ENCODE measurements at regions of chr12 and their contacts with region 1.

Region 1: GRCh38 chr12:42129595-42130204 is 15.0 kb downstream of the GXYLT1 start:
- DNase-seq: peak; percentile 80
- ATAC-seq: peak; percentile 82
- H3K4me3 ChIP-seq: no peak overlapping the region
- H3K27ac ChIP-seq: no peak overlapping the region
- H3K4me1 ChIP-seq: peaks cover 5% of the 10 kb centered on the region
- H3K27me3 ChIP-seq: no peaks in the 10 kb centered on the region
- CTCF ChIP-seq: peak; percentile 93
- POLR2A ChIP-seq: no peak
- RAD21 ChIP-seq: peak; percentile 96

Region 2: GRCh38 chr12:41344776-41345470 is 784.8 kb before region 1 on chr12:
- CTCF ChIA-PET with region 1: no interaction called
- POLR2A ChIA-PET with region 1: no interaction called
- dilution Hi-C with region 1: no loop called
- in situ Hi-C with region 1: no loop called
- intact Hi-C with region 1: no loop called
- DNase-seq: no peak
- ATAC-seq: no peak
- H3K4me3 ChIP-seq: no peak overlapping the region
- H3K27ac ChIP-seq: no peak overlapping the region
- H3K4me1 ChIP-seq: no peaks in the 10 kb centered on the region
- H3K27me3 ChIP-seq: no peaks in the 10 kb centered on the region
- CTCF ChIP-seq: no peak
- POLR2A ChIP-seq: no peak
- RAD21 ChIP-seq: no peak

Region 3: DNA sequence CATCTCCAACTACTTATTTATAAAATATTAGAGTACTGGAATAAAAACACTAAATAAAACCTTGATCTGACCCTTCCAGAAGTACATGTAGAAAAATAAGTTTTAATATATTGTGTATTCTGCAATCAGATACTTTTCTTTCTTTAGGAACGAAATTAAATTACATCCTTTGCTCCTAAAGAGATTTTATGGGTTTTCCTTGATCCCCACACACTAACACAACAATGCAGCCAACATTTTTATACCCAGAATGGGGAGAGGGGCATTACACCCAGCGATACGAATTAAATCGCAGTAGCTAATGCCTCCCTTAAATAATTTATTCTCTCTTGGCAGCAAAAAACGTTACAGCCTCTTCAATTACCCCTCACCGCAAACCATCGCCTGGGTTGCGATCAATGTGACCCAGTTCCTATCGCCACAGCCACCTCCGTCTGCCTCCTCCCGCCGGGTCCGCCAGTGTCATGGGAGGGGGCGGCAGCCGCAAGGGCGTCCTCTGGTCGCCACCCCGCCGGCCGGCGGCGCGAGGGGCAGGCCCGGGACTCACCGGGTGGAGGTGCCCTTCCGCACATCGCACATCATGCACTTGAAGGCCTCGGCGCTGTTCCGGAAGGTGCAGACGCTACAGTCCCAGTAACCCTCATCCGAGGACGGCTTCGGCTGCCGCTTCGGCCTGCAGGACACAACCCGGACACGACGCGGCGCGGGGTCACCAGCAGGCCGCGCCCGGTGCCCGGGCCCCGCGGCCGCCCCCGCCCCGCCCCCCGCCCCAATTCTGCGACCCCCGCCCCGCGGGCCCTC is 107.6 kb after region 1 on chr12:
- CTCF ChIA-PET with region 1: no interaction called
- POLR2A ChIA-PET with region 1: no interaction called
- dilution Hi-C with region 1: no loop called
- in situ Hi-C with region 1: no loop called
- intact Hi-C with region 1: loop called (anchors 5 kb)
- DNase-seq: peak; percentile 75
- ATAC-seq: peak; percentile 76
- H3K4me3 ChIP-seq: peak overlapping the region; percentile 97
- H3K27ac ChIP-seq: peak overlapping the region; percentile 85
- H3K4me1 ChIP-seq: no peaks in the 10 kb centered on the region
- H3K27me3 ChIP-seq: no peaks in the 10 kb centered on the region
- CTCF ChIP-seq: peak; percentile 45; the same call in 1 of the 2 replicates
- POLR2A ChIP-seq: no peak; the same call in 1 of the 2 replicates
- RAD21 ChIP-seq: peak; percentile 25

Region 4: DNA sequence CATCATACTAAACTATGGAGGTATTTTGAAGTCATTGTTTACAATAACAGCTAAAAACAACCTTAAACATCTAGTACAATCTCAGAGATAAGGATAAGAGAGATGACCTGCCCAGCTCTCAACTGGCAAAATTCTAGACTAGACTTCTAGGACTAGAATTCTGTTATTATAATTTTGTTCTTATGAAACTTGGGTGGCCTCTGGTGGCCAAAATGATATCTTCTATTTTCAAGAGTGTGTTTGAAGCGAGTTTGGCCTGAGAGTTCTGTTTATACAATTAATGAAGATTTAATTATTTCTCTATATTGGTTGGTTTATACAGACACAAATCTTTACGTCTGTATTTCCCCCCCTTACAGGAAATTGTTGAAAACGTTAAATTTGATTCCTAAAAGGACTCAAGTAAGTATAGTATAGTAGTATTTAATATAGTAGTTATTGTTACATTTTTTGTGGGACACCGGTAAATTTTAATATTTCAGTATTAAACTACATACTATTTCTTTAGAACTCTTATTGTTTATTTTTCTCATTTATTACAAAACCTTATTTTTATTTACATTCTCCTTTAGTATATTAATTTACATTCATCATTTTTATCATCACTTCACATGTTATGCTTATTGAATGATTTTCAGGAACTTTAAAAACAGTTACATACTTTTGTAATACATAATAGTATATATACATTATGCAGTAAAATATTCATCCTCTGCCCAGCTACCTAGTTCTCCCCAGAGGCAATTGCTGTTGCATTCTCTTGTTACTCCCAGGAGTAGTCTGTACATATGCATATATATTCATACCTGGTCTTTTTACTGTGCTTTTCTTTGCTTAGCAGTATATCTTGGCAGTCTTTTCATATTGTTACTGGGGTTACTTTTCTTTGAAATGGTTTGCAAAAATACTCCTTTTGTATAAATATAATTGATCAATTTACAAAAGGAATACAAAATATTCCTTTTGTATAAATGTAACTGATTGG is 202.9 kb after region 1 on chr12:
- CTCF ChIA-PET with region 1: interaction called, 3 read pairs
- POLR2A ChIA-PET with region 1: no interaction called
- dilution Hi-C with region 1: no loop called
- in situ Hi-C with region 1: loop called (anchors 5 kb)
- intact Hi-C with region 1: loop called (anchors 1 kb)
- DNase-seq: peak; percentile 51
- ATAC-seq: peak; percentile 85
- H3K4me3 ChIP-seq: no peak overlapping the region
- H3K27ac ChIP-seq: no peak overlapping the region
- H3K4me1 ChIP-seq: 0 out of 2 replicates have a peak, but pooled peaks cover 1% of the 10 kb centered on the region
- H3K27me3 ChIP-seq: no peaks in the 10 kb centered on the region
- CTCF ChIP-seq: peak; percentile 63
- POLR2A ChIP-seq: no peak
- RAD21 ChIP-seq: peak; percentile 66

Region 5: GRCh38 chr12:42482445-42483237 is 352.9 kb after region 1 on chr12:
- CTCF ChIA-PET with region 1: no interaction called
- POLR2A ChIA-PET with region 1: no interaction called
- dilution Hi-C with region 1: no loop called
- in situ Hi-C with region 1: no loop called
- intact Hi-C with region 1: loop called (anchors 5 kb)
- DNase-seq: peak; percentile 65
- ATAC-seq: peak; percentile 80
- H3K4me3 ChIP-seq: peak overlapping the region; percentile 91
- H3K27ac ChIP-seq: peak overlapping the region; percentile 91
- H3K4me1 ChIP-seq: peaks cover 7% of the 10 kb centered on the region
- H3K27me3 ChIP-seq: no peaks in the 10 kb centered on the region
- CTCF ChIP-seq: peak; percentile 93
- POLR2A ChIP-seq: no peak
- RAD21 ChIP-seq: peak; percentile 82

Region 6: GRCh38 chr12:43282106-43282505 is 1152.4 kb after region 1 on chr12:
- CTCF ChIA-PET with region 1: no interaction called
- POLR2A ChIA-PET with region 1: no interaction called
- dilution Hi-C with region 1: no loop called
- in situ Hi-C with region 1: loop called (anchors 10 kb)
- intact Hi-C with region 1: loop called (anchors 1 kb)
- DNase-seq: peak; percentile 65
- ATAC-seq: peak; percentile 22; the same call in 1 of the 2 replicates
- H3K4me3 ChIP-seq: no peak overlapping the region
- H3K27ac ChIP-seq: no peak overlapping the region
- H3K4me1 ChIP-seq: peaks cover 6% of the 10 kb centered on the region; the same call in 1 of the 2 replicates
- H3K27me3 ChIP-seq: no peaks in the 10 kb centered on the region
- CTCF ChIP-seq: peak; percentile 69
- POLR2A ChIP-seq: no peak
- RAD21 ChIP-seq: peak; percentile 78

Measured in IMR-90 (cell line).